ENCODE measurements at regions of chr19 and their contacts with region 1.

Region 1: GRCh38 chr19:1020868-1021425 is at the start of gene TMEM259:
- DNase-seq: peak; percentile 99
- ATAC-seq: peak; percentile 94
- total RNA-seq, gene TMEM259: 106 TPM

Region 2: GRCh38 chr19:756232-756631 is 264.7 kb before region 1 on chr19:
- intact Hi-C with region 1: no loop called
- DNase-seq: no peak
- ATAC-seq: no peak

Region 3: DNA sequence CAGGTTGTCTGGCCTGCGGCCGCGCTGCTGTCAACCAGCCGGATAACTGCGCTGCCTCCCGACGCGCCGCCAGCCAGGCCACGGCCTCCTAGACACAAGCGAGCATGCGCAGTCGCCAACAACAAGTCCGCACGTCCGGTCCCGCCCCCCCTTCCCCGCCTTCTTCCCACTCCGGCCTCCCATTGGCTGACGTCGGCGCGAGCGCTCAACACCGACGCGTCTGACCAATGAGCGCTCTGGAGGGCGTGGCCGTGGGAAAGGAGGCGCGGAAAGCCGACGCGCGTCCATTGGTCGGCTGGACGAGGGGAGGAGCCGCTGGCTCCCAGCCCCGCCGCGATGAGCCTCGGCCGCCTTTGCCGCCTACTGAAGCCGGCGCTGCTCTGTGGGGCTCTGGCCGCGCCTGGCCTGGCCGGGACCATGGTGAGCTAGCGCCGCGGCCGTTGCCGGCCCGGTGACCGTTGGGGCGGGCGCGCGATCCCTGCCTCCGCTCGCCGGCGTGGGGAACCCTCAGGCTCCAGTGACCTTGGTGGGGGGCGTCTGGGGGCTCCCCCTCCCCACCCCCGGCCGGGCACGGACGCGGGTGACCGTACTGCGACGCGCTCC is 82.9 kb after region 1 on chr19 and contains the start of gene GPX4:
- intact Hi-C with region 1: loop called (anchors 1 kb)
- DNase-seq: peak; percentile 100
- ATAC-seq: peak; percentile 86
- total RNA-seq, gene GPX4: 361 TPM

Measured in Right ventricle myocardium inferior (tissue), 1 donor.